ENCODE measurements at regions of chr3 and their contacts with region 1.

Region 1: GRCh38 chr3:120239644-120240043 is 45.4 kb downstream of the GPR156 start:
- DNase-seq: no peak
- ATAC-seq: no peak
- H3K4me3 ChIP-seq: no peak overlapping the region
- H3K27ac ChIP-seq: no peak overlapping the region
- H3K4me1 ChIP-seq: no peaks in the 10 kb centered on the region
- H3K27me3 ChIP-seq: no peaks in the 10 kb centered on the region
- CTCF ChIP-seq: no peak
- POLR2A ChIP-seq: no peak

Region 2: GRCh38 chr3:119898478-119899191 is 341.0 kb before region 1 on chr3:
- in situ Hi-C with region 1: no loop called
- intact Hi-C with region 1: no loop called
- DNase-seq: no peak
- ATAC-seq: peak in 1 of 2 donors; percentile 36
- H3K4me3 ChIP-seq: no peak overlapping the region
- H3K27ac ChIP-seq: no peak overlapping the region
- H3K4me1 ChIP-seq: no peaks in the 10 kb centered on the region
- H3K27me3 ChIP-seq: no peaks in the 10 kb centered on the region
- CTCF ChIP-seq: no peak
- POLR2A ChIP-seq: no peak

Region 3: DNA sequence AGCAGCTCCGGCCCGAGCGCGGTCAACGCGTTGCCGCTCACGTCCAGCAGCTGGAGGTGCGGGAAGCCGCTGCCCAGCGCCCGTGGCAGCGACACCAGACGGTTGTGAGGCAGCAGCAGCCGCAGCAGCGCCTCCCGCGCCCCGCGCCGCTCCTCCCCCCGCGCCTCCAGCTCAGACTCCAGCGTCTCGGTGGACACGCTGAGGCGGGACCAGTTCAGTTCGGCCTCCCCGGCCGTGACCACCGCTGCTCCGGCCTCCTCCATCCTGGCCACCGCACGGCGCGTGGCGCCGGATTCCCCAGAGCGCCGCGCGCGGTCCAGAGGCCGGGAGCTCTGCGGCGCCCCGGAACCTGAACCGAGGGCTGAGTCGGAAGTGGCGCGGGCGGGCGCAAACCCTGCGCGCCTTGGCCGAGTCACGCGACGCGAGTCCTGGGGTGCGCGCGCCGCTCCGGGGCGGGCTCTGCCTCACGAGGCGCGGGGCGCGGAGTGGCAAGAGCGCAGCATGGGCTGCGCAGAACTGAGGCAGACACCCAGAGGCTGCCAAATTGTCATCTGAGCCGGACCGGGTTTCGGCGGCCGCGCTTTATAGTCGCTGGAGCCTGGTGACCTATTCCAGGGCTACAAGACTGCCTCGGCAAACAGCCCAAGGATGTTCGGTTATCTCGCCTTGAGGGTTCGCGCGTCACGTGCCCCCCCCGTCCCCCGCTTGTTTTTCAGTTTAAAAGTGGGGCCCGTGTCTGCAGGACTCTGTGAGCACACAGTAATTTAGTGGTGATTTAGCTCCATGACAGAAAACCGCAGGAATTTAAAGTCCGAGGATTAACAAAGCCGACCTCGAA is 109.6 kb after region 1 on chr3 and contains the start of gene LRRC58:
- in situ Hi-C with region 1: no loop called
- intact Hi-C with region 1: loop called (anchors 5 kb)
- DNase-seq: peak; percentile 82 to 93
- ATAC-seq: peak; percentile 88 to 93
- H3K4me3 ChIP-seq: peak within 1 kb of the TSS; percentile 77 to 95 (median 85)
- H3K27ac ChIP-seq: peak within 1 kb of the TSS; percentile 88 to 93 (median 90)
- H3K4me1 ChIP-seq: peaks cover 20 to 43% of the 10 kb centered on the region in 2 donors
- H3K27me3 ChIP-seq: no peaks in the 10 kb centered on the region
- CTCF ChIP-seq: peak in 4 of 5 experiments; percentile 14 to 48 (median 28)
- POLR2A ChIP-seq: peak; percentile 92 to 95
- total RNA-seq, gene LRRC58: 8.4 to 15.2 (median 13.6) TPM

Region 4: GRCh38 chr3:120410541-120410940 is 170.9 kb after region 1 on chr3:
- in situ Hi-C with region 1: loop called (anchors 5 to 10 kb)
- intact Hi-C with region 1: no loop called
- DNase-seq: no peak
- ATAC-seq: no peak
- H3K4me3 ChIP-seq: no peak overlapping the region
- H3K27ac ChIP-seq: no peak overlapping the region
- H3K4me1 ChIP-seq: no peaks in the 10 kb centered on the region
- H3K27me3 ChIP-seq: no peaks in the 10 kb centered on the region
- CTCF ChIP-seq: no peak
- POLR2A ChIP-seq: no peak

Measured in gastrocnemius medialis (tissue), 4 donors.